ENCODE measurements at regions of chr17 and their contacts with region 1.

Region 1: DNA sequence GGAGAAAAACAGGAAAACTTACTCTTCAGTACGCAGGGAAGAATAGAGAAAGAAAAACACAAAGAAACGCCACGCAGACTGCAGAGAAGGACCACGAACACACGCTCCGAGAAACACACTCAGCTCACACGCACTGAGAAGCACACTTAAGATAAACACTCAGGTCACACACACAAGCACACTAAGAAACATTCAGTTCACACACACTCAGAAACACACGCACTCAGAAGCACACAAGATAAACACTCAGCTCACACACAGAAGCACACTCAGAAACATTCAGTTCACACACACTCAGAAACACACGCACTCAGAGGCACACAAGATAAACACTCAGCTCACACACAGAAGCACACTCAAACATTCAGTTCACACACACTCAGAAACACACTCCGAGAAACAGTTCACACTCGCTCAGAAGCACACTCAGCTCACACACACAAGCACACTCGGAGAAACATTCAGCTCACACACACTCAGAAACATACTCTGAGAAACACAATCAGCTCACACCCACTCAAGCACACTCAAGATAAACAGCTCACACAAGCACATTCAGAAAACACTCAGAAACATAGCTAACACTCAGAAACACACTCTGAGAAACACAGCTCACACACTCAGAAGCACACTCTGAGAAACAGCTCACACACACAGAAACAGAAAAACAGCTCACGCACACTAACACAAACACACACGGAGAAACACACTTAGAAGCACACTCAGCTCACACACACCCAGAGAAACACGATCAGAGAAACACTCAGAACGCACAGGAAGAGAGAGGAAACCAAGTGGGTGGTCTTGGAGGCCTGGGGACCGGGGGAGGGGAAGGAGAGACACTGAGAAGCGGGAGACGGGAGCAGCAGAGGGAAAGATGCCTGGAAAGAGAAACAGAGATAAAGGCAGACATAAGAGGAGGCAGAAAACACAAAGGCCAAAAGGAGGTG is 908 bp downstream of the TMEM98 start:
- DNase-seq: no peak
- H3K4me3 ChIP-seq: peak overlapping the region; percentile 49 to 54 (median 53)
- H3K27ac ChIP-seq: no peak overlapping the region
- H3K4me1 ChIP-seq: peaks cover 18% of the 10 kb centered on the region
- H3K27me3 ChIP-seq: no peaks in the 10 kb centered on the region
- CTCF ChIP-seq: no peak

Region 2: DNA sequence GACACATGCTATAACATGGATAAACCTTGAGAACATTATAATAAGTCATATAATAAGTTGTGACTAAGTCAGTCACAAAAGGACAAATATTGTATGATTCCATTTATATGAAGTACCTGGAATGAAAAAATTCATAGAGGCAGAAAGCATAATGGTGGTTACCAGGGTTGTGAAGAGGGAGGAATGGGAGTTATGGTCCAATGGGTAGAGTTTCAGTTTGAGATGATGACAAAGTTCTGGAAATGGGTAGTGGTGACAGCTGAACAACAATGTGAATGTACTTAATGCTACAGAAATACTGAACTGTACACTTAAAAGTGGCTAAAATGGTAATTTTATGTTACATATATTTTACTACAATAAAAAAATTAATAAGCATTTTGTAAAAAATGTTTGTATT is 101.6 kb before region 1 on chr17:
- CTCF ChIA-PET with region 1: interaction called, 12 read pairs
- dilution Hi-C with region 1: no loop called
- in situ Hi-C with region 1: no loop called
- intact Hi-C with region 1: no loop called
- DNase-seq: no peak
- H3K4me3 ChIP-seq: no peak overlapping the region
- H3K27ac ChIP-seq: no peak overlapping the region
- H3K4me1 ChIP-seq: peaks cover 10% of the 10 kb centered on the region
- H3K27me3 ChIP-seq: no peaks in the 10 kb centered on the region
- CTCF ChIP-seq: no peak